IMR-90 (cell line): ENCODE measurements at regions of chr19 and their contacts with region 1.

Region 1: GRCh38 chr19:1540365-1540925 is 16.6 kb downstream of the PLK5 start:
- DNase-seq: no peak
- ATAC-seq: peak; percentile 32; the same call in 1 of the 2 replicates
- H3K4me3 ChIP-seq: no peak overlapping the region
- H3K27ac ChIP-seq: no peak overlapping the region
- H3K4me1 ChIP-seq: peaks cover 2% of the 10 kb centered on the region; the same call in 1 of the 2 replicates
- H3K27me3 ChIP-seq: peaks cover 2% of the 10 kb centered on the region; the same call in 1 of the 2 replicates
- CTCF ChIP-seq: no peak
- POLR2A ChIP-seq: no peak
- RAD21 ChIP-seq: no peak

Region 2: GRCh38 chr19:1568320-1569019 is 28.0 kb after region 1 on chr19 and contains the start of gene MEX3D:
- CTCF ChIA-PET with region 1: no interaction called
- POLR2A ChIA-PET with region 1: no interaction called
- dilution Hi-C with region 1: no loop called
- in situ Hi-C with region 1: no loop called
- intact Hi-C with region 1: no loop called
- DNase-seq: peak; percentile 49
- ATAC-seq: peak; percentile 74
- H3K4me3 ChIP-seq: peak within 1 kb of the TSS; percentile 97
- H3K27ac ChIP-seq: peak within 1 kb of the TSS; percentile 95
- H3K4me1 ChIP-seq: peaks cover 8% of the 10 kb centered on the region
- H3K27me3 ChIP-seq: no peaks in the 10 kb centered on the region; the same call in 1 of the 2 replicates
- CTCF ChIP-seq: no peak
- POLR2A ChIP-seq: no peak
- RAD21 ChIP-seq: no peak
- total RNA-seq, gene MEX3D: 9.1 and 11.9 TPM in 2 replicates

Region 3: DNA sequence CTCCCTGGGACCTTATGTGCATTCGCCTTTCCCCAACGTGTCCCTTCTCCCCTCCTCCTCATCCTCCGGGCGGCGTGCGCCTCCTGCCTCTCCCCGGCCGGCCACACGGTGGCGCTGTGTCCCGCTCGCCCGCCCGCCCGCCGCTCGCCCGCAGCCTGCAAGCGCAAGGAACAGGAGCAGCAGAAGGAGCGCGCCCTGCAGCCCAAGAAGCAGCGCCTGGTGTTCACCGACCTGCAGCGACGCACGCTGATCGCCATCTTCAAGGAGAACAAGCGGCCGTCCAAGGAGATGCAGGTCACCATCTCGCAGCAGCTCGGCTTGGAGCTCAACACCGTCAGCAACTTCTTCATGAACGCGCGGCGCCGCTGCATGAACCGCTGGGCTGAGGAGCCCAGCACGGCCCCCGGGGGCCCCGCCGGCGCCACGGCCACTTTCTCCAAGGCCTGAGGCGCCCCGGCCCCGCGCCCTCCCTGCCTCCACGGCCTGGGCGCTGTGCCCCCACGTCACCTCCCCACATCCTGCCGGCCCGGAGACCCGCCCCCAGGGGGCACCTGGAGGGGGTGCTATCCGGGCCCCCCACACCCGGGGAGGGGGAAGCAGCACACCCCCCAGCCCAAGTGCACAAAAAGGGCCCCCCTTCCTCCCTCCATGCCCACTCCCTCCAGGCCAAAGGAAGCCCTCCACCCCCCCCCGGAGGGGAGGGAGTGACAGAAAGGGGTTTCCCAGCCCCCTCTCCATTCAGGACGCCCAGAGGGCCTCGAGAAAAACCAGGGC is 234.7 kb after region 1 on chr19:
- CTCF ChIA-PET with region 1: no interaction called
- POLR2A ChIA-PET with region 1: no interaction called
- dilution Hi-C with region 1: no loop called
- in situ Hi-C with region 1: loop called (anchors 25 kb)
- intact Hi-C with region 1: no loop called
- DNase-seq: no peak
- ATAC-seq: peak; percentile 57
- H3K4me3 ChIP-seq: no peak overlapping the region
- H3K27ac ChIP-seq: no peak overlapping the region
- H3K4me1 ChIP-seq: no peaks in the 10 kb centered on the region
- H3K27me3 ChIP-seq: peaks cover 61% of the 10 kb centered on the region
- CTCF ChIP-seq: peak; percentile 26; the same call in 1 of the 2 replicates
- POLR2A ChIP-seq: no peak
- RAD21 ChIP-seq: no peak